PC-3 (cell line): ENCODE measurements at regions of chr14 and their contacts with region 1.

Region 1: DNA sequence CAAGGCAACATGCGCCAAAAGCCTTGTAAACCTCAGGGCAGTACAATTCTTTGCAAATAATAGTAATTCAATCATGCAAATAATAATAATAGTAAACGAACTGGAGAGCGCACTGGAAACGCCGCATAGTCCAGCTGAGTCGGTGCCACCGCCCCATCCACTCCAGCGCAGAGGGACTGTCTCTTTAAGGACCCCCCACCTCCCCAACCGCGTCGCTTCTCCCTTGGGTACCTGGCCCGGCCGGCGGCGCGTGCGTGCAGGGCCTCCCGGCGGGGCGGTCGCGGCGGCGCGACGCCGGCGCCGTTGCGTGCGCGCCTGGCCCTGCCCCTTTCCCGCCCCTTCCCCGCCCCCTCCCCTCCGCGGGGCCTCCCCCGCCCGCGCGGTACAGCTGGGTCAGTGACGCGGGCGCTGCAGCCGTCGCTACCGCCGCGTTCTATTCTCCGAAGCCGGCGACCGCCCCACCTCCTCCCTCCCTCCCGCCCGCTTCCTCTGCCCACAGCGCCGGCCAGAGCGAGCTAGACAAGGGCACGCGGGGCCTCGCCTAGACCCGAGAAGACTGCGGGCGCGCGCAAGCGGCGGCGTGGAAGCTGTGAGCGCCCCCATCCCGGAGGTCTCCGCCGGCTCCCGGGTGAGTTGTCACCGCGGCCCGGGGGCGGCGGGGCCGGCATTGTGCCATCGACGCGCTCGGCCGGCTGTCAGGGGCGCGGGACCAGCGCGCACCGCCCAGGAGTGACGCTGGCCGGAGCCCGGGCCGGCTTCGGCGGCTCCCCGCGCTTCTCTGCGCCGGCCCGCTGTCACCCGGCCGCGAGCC is at the start of gene SUSD6:
- DNase-seq: peak; percentile 91
- ATAC-seq: peak; percentile 88
- H3K4me3 ChIP-seq: peak within 1 kb of the TSS; percentile 75
- H3K27ac ChIP-seq: no peak within 1 kb of the TSS
- H3K4me1 ChIP-seq: peaks cover 27% of the 10 kb centered on the region
- H3K27me3 ChIP-seq: no peaks in the 10 kb centered on the region
- CTCF ChIP-seq: no peak
- total RNA-seq, gene SUSD6: 6.1 and 9.3 TPM in 2 replicates

Region 2: GRCh38 chr14:69376439-69376838 is 235.0 kb before region 1 on chr14:
- CTCF ChIA-PET with region 1: no interaction called
- POLR2A ChIA-PET with region 1: no interaction called
- intact Hi-C with region 1: no loop called
- DNase-seq: no peak
- ATAC-seq: peak; percentile 29; the same call in 1 of the 2 replicates
- H3K4me3 ChIP-seq: no peak overlapping the region
- H3K27ac ChIP-seq: no peak overlapping the region
- H3K4me1 ChIP-seq: no peaks in the 10 kb centered on the region
- H3K27me3 ChIP-seq: no peaks in the 10 kb centered on the region
- CTCF ChIP-seq: no peak

Region 3: DNA sequence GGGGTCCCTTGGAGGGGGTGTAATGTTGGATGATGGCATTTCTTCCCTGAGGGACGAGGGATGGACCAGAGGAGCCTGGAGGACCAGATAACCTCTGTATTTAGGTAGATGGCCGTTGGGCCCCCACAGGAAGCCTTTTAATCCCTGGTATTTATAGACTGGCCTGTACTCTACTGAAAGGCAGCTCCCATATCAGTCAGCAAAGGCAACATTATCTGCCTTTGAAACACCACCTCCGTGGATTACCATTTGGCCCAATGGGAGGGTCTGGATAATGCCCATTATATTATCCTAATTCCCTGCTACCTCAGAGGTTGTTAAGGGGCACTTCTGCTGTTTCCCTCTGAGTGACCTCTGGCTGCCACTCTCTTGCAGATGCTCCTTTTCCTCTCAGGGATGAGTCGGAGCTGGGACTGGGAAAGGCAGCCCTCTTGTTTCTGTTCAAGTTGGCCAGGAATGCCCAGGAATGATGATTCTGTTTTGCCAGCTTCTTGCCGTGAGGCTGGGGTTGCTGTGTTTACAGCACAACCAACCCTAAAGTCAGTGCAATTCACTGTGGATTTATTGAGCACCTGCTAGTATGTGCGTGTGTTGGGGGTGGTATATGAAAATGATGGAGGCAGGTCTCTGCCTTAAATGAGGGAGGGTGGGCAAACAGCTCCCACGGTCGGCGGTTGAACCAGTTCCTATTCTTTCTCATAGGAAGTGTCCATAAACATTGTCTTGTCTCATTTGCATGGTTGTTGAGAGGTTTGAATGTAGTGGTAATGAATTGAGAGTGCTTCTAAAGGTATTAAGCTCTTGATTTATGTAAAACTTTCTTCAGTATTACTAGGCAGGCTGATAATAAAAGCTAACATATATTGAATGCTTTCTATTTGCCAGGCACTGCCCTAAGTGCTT is 18.1 kb after region 1 on chr14:
- CTCF ChIA-PET with region 1: no interaction called
- POLR2A ChIA-PET with region 1: no interaction called
- intact Hi-C with region 1: loop called (anchors 2 kb)
- DNase-seq: no peak
- ATAC-seq: no peak
- H3K4me3 ChIP-seq: no peak overlapping the region
- H3K27ac ChIP-seq: no peak overlapping the region
- H3K4me1 ChIP-seq: peaks cover 25% of the 10 kb centered on the region
- H3K27me3 ChIP-seq: no peaks in the 10 kb centered on the region
- CTCF ChIP-seq: no peak

Region 4: DNA sequence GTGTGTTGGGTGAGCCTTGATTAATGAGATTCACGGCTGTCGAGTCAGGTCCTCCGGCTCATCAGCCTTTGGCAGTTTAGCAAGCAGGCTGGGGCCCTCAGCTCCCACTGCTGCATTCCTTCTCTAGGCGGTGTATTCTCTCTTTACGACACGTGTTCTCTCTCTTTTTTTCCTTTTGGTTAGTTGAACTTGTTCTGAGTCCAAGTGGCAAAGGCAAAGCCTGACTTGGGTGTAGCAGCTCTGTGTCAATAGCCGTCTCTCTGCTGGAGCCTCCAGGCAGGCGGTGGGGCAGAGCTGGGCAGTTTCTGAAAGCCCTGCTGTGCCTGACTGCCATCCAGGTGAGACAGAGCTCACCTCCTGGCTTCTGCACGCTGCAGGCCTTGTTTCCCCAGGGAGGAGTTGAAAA is 46.5 kb after region 1 on chr14:
- CTCF ChIA-PET with region 1: no interaction called
- POLR2A ChIA-PET with region 1: interaction called, 6 read pairs
- intact Hi-C with region 1: loop called (anchors 1 kb)
- DNase-seq: peak; percentile 79
- ATAC-seq: peak; percentile 70
- H3K4me3 ChIP-seq: peak overlapping the region; percentile 3; the same call in 1 of the 2 replicates
- H3K27ac ChIP-seq: peak overlapping the region; percentile 64
- H3K4me1 ChIP-seq: peaks cover 55% of the 10 kb centered on the region
- H3K27me3 ChIP-seq: no peaks in the 10 kb centered on the region
- CTCF ChIP-seq: no peak

Region 5: DNA sequence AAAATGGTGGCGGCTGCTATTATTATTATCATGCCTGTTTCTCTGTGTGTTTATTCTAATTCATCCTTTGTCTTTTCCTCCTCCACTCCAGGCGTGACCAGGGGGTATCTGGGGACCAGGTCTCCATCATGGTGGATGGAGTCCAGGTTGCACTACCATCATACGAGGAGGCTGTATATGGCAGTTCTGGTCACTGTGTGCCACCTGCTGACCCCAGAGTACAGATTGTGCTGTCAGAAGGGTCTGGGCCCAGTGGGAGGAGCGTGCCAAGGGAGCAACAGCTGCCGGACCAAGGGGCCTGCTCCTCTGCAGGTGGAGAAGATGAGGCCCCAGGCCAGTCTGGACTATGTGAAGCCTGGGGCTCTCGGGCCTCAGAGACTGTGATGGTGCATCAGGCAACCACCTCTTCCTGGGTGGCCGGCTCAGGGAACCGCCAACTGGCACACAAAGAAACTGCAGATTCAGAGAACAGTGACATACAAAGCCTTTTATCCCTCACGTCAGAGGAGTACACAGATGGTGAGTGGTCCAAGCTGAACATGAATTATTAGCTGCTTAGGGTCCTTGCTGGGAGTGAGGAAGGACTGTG is 97.3 kb after region 1 on chr14:
- CTCF ChIA-PET with region 1: no interaction called
- POLR2A ChIA-PET with region 1: no interaction called
- intact Hi-C with region 1: loop called (anchors 2 kb)
- DNase-seq: peak; percentile 46
- ATAC-seq: peak; percentile 86
- H3K4me3 ChIP-seq: no peak overlapping the region
- H3K27ac ChIP-seq: no peak overlapping the region
- H3K4me1 ChIP-seq: 0 out of 2 replicates have a peak, but pooled peaks cover 2% of the 10 kb centered on the region
- H3K27me3 ChIP-seq: no peaks in the 10 kb centered on the region
- CTCF ChIP-seq: peak; percentile 65

Region 6: GRCh38 chr14:69766984-69767368 is 155.6 kb after region 1 on chr14 and contains the start of gene SRSF5:
- CTCF ChIA-PET with region 1: no interaction called
- POLR2A ChIA-PET with region 1: interaction called, 4 read pairs
- intact Hi-C with region 1: loop called (anchors 2 kb)
- DNase-seq: peak; percentile 98
- ATAC-seq: peak; percentile 91
- H3K4me3 ChIP-seq: peak within 1 kb of the TSS; percentile 89
- H3K27ac ChIP-seq: peak within 1 kb of the TSS; percentile 80
- H3K4me1 ChIP-seq: peaks cover 21% of the 10 kb centered on the region
- H3K27me3 ChIP-seq: no peaks in the 10 kb centered on the region
- CTCF ChIP-seq: no peak
- total RNA-seq, gene SRSF5: 213 and 309 TPM in 2 replicates